BJ (cell line): ENCODE measurements at regions of chr2 and their contacts with region 1.

Region 1: DNA sequence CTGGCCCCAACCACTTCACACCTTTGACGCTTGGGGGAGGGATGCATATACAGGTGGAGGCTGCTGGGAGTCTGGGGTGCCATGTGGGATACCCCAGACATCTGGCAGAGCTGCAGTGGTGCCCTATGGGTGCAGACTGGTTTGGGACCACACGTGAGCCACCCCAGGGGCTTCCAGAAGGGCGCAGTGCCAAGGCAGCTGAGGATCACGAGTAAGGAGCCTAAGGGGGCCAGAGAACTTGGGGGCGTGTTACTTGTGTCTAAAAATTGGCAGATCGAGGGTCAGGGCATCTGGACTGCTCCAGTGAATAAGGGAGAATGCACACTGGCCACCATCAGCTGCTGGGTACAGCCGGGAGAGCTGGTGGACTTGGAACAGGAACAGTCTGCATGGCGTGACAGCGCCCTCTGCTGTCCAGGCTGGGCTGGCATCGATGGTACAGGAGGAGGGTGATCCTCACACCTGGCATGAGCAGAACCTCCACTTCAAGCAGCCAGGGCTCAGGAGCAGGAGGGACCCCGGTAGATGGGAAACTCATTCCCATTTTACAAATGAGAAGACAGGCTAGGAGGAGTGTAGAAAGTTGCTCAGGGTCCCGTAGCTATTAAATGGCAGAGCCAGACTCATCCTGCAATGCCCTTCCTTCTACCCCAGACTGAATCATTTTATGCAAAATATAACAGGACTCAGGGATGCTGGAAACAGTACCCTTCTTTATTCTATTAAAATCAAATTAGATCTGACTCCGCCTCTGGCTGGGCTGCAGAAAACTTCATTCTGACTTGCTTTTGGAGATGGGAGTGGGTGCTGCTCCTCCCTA is 60.4 kb downstream of the ATOH8 start:
- DNase-seq: no peak
- H3K4me3 ChIP-seq: no peak overlapping the region
- H3K27me3 ChIP-seq: no peaks in the 10 kb centered on the region
- CTCF ChIP-seq: peak; percentile 96

Region 2: DNA sequence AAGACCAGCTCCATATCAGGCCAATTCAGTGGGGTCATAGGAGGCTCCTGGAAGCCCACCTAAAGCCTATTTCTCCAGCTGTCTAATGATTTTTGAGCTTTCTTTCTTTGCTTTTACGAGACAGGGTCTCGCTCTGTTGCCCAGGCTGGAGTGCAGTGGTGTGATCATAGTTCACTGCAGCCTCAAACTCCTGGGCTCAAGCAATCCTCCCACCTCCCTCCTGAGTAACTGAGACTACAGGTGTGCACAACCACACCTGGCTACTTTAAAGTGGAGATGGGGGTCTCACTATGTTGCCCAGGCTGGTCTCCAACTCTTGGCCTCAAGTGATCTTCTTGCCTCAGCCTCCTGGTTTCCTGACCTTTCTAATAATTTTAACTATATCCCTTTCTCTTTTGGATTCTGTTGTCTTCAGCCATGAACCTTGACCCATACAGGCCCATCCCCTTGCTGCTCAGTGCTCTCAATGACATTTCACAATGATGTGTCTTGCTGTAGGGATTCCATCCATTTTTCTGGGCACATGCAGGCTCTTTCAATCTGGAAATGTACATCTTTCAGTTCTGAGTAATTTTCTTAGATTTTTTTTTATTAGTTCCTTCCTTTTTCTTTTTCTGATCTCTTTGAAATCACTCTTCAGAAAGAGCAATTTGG is 90.4 kb before region 1 on chr2:
- CTCF ChIA-PET with region 1: interaction called, 194 read pairs
- POLR2A ChIA-PET with region 1: interaction called, 3 read pairs
- DNase-seq: no peak
- H3K4me3 ChIP-seq: no peak overlapping the region
- H3K27me3 ChIP-seq: no peaks in the 10 kb centered on the region
- CTCF ChIP-seq: no peak

Region 3: DNA sequence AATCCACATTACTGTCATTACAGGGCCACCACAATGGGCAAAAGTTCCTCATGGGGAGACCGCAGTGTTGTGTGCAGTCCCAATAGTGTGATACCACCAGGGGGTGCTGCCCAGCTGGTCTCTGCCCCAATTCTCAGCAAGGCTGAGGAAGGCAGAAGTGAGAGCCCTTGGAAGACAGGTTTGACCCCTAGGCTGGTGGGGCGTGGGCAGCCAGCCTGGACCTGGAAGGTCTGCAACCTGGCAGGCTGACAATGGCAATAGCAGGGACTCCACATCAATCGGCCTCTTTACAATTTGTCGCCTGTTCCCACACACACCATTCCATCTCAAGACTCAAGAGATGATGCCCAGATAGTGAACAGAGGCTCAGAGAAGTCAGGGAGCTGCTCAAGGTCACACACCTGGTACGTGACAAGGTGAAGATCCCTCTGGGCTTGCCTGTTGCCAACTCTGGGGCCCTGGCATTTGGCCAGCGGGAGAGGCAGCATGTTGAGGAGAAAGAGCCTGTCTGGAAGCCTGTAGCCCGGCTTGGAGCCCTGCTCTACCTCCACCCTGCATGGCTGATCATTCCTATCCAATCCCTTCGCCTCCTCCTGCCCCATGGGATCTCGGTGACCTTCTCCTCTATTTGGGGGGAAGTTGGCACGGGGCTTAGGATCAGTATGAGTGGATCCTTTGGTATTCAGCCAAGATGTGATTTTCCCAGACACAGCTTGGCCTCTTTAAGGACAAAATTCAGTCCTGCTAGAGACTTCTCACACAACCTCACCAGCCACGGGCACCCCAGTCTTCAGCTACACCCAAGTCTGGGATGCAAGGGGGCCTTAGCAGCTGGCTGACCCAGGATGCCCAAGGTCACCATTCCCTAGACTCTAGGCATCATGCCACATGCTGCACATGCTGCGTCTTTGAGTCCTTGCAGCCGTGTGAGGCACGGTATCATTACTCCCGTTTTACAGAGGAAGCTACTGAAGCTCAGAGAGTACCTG is 63.3 kb before region 1 on chr2:
- CTCF ChIA-PET with region 1: interaction called, 245 read pairs
- POLR2A ChIA-PET with region 1: no interaction called
- DNase-seq: no peak
- H3K4me3 ChIP-seq: no peak overlapping the region
- H3K27me3 ChIP-seq: no peaks in the 10 kb centered on the region
- CTCF ChIP-seq: peak; percentile 90

Region 4: DNA sequence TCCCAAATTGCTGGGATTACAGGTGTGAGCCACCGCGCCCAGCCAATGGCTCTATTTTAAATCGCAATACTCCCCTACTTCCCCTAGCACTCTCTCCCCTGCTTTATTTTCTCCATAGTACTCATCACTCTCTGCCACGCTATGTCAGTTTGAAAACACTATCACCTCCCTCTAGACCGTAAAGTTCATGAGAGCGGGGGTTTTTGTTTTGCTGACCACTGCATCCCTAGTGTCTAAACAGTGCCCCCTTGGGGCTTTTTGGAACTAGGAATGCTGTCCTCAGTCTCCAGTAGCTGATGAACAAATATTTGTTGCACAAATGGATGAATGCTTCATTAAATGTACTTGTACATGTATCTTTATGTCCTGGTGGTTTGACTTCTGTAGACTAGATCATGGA is 16.3 kb before region 1 on chr2:
- CTCF ChIA-PET with region 1: interaction called, 19 read pairs
- POLR2A ChIA-PET with region 1: no interaction called
- DNase-seq: no peak
- H3K4me3 ChIP-seq: no peak overlapping the region
- H3K27me3 ChIP-seq: no peaks in the 10 kb centered on the region
- CTCF ChIP-seq: peak; percentile 62